B cell (primary cell): ENCODE measurements at regions of chr19 and their contacts with region 1.

Region 1: DNA sequence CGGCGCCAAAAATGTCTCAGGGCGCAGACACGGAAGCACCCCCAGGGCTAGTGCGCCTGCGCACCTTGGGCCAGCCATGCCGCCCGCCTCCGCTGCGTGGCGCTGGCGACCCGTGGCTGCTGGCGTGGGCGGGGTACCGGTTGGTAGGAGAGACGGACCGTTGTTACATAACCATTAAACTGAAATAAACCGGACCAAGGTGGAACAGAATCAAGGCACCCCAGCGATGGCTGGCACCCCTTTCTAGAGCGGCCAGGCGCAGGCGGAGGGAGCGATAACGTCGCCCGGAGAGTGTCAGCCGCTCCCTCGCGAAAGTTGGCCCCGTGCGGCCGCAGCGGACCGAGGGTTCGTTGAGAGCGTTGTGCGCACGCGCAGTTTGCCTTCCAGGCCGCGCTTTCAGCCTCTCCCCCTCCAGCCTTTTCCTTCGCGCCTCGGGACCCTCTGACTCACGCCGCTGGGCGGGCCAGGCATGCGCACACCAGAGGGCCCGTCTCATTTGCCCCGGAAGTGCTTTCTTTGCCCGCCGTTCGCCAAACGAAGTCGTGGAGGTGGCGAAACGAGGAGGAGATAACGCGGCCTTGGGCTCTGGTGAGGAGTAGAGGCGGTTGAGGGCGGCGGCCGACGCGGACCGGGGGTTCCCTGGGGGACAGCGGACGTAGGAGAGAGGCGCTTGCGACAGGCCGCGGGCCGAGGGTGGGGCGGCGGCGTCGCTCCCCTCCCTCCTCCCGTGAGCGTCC is at the starts of genes PLEKHJ1 and SF3A2:
- DNase-seq: peak; percentile 99
- ATAC-seq: peak; percentile 83
- H3K4me3 ChIP-seq: peak within 1 kb of the TSS; percentile 19 to 94 (median 70)
- H3K4me3 Mint-ChIP-seq: peak within 1 kb of the TSS; percentile 93
- H3K27ac ChIP-seq: peak within 1 kb of the TSS; percentile 97 to 99
- H3K27ac Mint-ChIP-seq: peak within 1 kb of the TSS; percentile 98
- H3K4me1 ChIP-seq: peaks cover 46 to 66% of the 10 kb centered on the region in 2 donors
- H3K4me1 Mint-ChIP-seq: peaks cover 65% of the 10 kb centered on the region
- H3K27me3 ChIP-seq: no peaks in the 10 kb centered on the region
- H3K27me3 Mint-ChIP-seq: no peaks in the 10 kb centered on the region
- CTCF ChIP-seq: peak; percentile 98
- total RNA-seq, gene PLEKHJ1: 82.4 and 86.7 TPM in 2 replicates
- total RNA-seq, gene SF3A2: 129 and 140 TPM in 2 replicates

Region 2: GRCh38 chr19:2117215-2117960 is 119.1 kb before region 1 on chr19:
- CTCF ChIA-PET with region 1: no interaction called
- POLR2A ChIA-PET with region 1: no interaction called
- intact Hi-C with region 1: no loop called
- DNase-seq: no peak
- ATAC-seq: no peak
- H3K4me3 ChIP-seq: no peak overlapping the region
- H3K4me3 Mint-ChIP-seq: no peak overlapping the region
- H3K27ac ChIP-seq: no peak overlapping the region
- H3K27ac Mint-ChIP-seq: no peak overlapping the region
- H3K4me1 ChIP-seq: no peaks in the 10 kb centered on the region
- H3K4me1 Mint-ChIP-seq: peaks cover 2% of the 10 kb centered on the region
- H3K27me3 ChIP-seq: no peaks in the 10 kb centered on the region
- H3K27me3 Mint-ChIP-seq: no peaks in the 10 kb centered on the region
- CTCF ChIP-seq: no peak

Region 3: DNA sequence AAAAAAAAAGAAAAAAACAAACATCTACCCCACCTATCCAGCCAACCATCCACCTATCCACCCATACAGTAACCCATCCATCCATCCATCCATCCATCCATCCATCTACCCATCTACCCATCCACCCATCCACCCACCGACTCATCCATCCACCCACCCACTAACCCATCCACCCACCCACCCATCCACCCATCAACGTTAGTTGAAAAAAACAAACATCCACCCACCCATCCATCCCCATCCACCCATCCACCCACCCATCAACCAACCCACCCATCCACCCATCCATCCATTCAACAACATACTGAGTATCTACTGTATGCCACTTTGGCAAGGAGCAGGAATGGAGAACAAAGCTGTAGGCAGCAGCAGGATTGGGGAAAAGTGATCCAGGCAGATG is 79.0 kb before region 1 on chr19:
- CTCF ChIA-PET with region 1: interaction called, 10 read pairs
- POLR2A ChIA-PET with region 1: interaction called, 3 read pairs
- intact Hi-C with region 1: loop called (anchors 2 kb)
- DNase-seq: no peak
- ATAC-seq: no peak
- H3K4me3 ChIP-seq: no peak overlapping the region
- H3K4me3 Mint-ChIP-seq: no peak overlapping the region
- H3K27ac ChIP-seq: no peak overlapping the region
- H3K27ac Mint-ChIP-seq: no peak overlapping the region
- H3K4me1 ChIP-seq: peaks cover 0 to 9% of the 10 kb centered on the region in 2 donors
- H3K4me1 Mint-ChIP-seq: peaks cover 10% of the 10 kb centered on the region
- H3K27me3 ChIP-seq: no peaks in the 10 kb centered on the region
- H3K27me3 Mint-ChIP-seq: no peaks in the 10 kb centered on the region
- CTCF ChIP-seq: no peak

Region 4: DNA sequence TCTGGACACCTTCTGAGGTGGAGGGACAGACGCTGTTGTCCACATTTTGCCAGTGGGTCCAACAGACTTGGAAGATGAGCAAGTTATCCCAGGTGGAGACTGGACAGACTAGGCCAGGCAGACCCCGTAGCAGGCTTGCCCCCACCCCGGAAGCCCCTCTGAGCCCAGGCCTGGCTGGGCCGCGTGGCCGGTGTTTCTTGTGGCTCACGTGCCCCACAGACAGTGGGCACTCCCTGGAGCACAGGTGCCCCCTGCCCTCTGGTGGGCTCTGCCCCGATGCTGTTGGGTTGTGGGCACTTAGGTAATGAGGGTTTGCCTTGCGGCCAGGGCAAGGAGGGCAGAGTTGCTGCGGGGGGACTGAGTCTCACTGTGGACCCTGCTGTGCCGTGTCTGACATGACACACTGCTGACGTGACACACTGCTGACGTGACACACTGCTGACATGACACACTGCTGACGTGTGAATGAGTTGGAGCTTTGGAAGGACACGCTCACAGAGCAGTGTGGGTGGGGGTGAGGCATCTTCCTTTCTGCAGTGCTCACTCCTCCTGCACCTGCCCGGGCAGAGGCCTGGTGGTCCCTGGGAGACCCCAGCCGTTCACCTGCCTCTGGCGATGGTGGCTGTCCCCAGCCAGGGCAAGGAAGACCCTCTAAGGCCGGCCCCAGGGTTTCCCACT is 47.6 kb before region 1 on chr19:
- CTCF ChIA-PET with region 1: no interaction called
- POLR2A ChIA-PET with region 1: no interaction called
- intact Hi-C with region 1: no loop called
- DNase-seq: no peak
- ATAC-seq: no peak
- H3K4me3 ChIP-seq: no peak overlapping the region
- H3K4me3 Mint-ChIP-seq: peak overlapping the region; percentile 49
- H3K27ac ChIP-seq: no peak overlapping the region
- H3K27ac Mint-ChIP-seq: peak overlapping the region; percentile 65
- H3K4me1 ChIP-seq: peaks cover 17 to 26% of the 10 kb centered on the region in 2 donors
- H3K4me1 Mint-ChIP-seq: peaks cover 37% of the 10 kb centered on the region
- H3K27me3 ChIP-seq: no peaks in the 10 kb centered on the region
- H3K27me3 Mint-ChIP-seq: no peaks in the 10 kb centered on the region
- CTCF ChIP-seq: no peak

Region 5: GRCh38 chr19:2221918-2222317 is 14.6 kb before region 1 on chr19:
- CTCF ChIA-PET with region 1: interaction called, 7 read pairs
- POLR2A ChIA-PET with region 1: interaction called, 4 read pairs
- intact Hi-C with region 1: loop called (anchors 1 kb)
- DNase-seq: no peak
- ATAC-seq: no peak
- H3K4me3 ChIP-seq: no peak overlapping the region
- H3K4me3 Mint-ChIP-seq: no peak overlapping the region
- H3K27ac ChIP-seq: no peak overlapping the region
- H3K27ac Mint-ChIP-seq: no peak overlapping the region
- H3K4me1 ChIP-seq: peaks cover 16 to 25% of the 10 kb centered on the region in 2 donors
- H3K4me1 Mint-ChIP-seq: peaks cover 29% of the 10 kb centered on the region
- H3K27me3 ChIP-seq: no peaks in the 10 kb centered on the region
- H3K27me3 Mint-ChIP-seq: no peaks in the 10 kb centered on the region
- CTCF ChIP-seq: no peak

Region 6: DNA sequence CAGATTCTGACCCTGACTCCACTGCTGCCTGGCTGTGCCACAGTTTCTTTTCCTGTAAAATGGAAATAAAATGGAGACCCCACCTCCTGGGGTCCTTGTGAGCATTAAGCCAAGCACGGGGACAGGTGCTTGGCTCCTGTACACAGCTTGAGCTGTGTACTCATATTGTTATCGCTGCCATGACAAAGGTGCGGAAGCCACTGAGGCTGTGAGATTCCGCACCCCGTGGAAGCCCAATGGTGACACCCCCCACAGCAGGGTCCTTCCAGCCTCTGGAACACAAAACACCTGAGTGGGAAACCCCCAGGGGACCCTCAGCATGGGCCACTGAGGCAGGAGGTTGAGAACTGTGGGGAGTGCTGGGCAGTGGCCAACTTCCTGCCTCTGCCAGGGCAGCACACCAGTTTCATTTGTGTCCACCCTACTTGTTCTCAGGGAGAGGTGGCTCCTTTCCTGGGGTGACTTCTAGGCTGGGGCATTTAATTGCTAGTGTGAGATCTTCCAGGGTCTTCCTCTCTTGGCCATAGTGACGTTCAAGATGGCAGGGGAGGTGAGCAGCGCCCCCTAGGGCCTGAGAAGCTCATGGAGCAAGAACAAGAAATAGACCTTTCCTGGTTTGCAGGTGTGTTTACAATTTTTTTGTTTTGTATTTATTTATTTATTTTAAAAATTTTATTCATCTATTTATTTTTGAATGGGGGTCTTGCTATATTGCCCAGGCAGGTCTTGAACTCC is 25.1 kb after region 1 on chr19:
- CTCF ChIA-PET with region 1: interaction called, 6 read pairs
- POLR2A ChIA-PET with region 1: interaction called, 10 read pairs
- intact Hi-C with region 1: loop called (anchors 1 kb)
- DNase-seq: no peak
- ATAC-seq: no peak
- H3K4me3 ChIP-seq: no peak overlapping the region
- H3K4me3 Mint-ChIP-seq: peak overlapping the region; percentile 55
- H3K27ac ChIP-seq: no peak overlapping the region
- H3K27ac Mint-ChIP-seq: peak overlapping the region; percentile 85
- H3K4me1 ChIP-seq: peaks cover 54 to 88% of the 10 kb centered on the region in 2 donors
- H3K4me1 Mint-ChIP-seq: peaks cover 50% of the 10 kb centered on the region
- H3K27me3 ChIP-seq: no peaks in the 10 kb centered on the region
- H3K27me3 Mint-ChIP-seq: no peaks in the 10 kb centered on the region
- CTCF ChIP-seq: peak; percentile 54

Region 7: DNA sequence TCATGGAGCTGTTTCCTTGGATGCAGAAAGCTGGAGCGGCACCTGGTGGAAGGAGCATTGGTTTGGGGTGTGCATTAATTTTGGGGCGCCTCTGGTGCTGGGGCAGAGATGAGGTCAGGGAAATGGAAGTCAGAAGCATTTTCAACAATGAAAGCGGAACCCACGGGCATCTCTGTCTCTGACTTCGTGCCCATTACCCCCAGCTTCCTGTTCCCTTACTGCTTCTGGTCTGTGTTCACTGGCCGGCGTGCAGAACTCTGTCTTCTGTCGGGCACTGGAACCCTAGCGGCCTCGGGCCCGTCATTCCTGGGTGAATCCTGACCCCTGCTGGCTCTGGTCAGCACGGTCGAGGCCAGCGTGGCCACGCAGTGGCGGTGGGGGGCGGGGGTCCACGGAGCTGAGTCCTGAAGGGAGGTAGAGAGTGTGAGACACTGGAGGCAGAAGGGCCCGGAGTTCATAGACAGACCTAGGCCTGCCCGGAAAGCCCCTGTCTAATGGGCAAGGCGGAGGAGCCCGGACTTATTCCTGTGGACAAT is 79.4 kb after region 1 on chr19:
- CTCF ChIA-PET with region 1: interaction called, 17 read pairs
- POLR2A ChIA-PET with region 1: interaction called, 8 read pairs
- intact Hi-C with region 1: loop called (anchors 1 kb)
- DNase-seq: peak; percentile 74
- ATAC-seq: peak; percentile 75
- H3K4me3 ChIP-seq: peak overlapping the region in 1 of 5 experiments; percentile 19
- H3K4me3 Mint-ChIP-seq: peak overlapping the region; percentile 74
- H3K27ac ChIP-seq: peak overlapping the region; percentile 62 to 75
- H3K27ac Mint-ChIP-seq: peak overlapping the region; percentile 93
- H3K4me1 ChIP-seq: peaks cover 46 to 55% of the 10 kb centered on the region in 2 donors
- H3K4me1 Mint-ChIP-seq: peaks cover 51% of the 10 kb centered on the region
- H3K27me3 ChIP-seq: peaks cover 0 to 10% (median 3%) of the 10 kb centered on the region in 4 experiments
- H3K27me3 Mint-ChIP-seq: no peaks in the 10 kb centered on the region
- CTCF ChIP-seq: no peak

Region 8: GRCh38 chr19:2427429-2428320 is 191.2 kb after region 1 on chr19 and contains the start of gene TIMM13:
- CTCF ChIA-PET with region 1: no interaction called
- POLR2A ChIA-PET with region 1: no interaction called
- intact Hi-C with region 1: loop called (anchors 1 kb)
- DNase-seq: peak; percentile 99
- ATAC-seq: peak; percentile 93
- H3K4me3 ChIP-seq: peak within 1 kb of the TSS; percentile 57 to 90 (median 74)
- H3K4me3 Mint-ChIP-seq: peak within 1 kb of the TSS; percentile 96
- H3K27ac ChIP-seq: peak within 1 kb of the TSS; percentile 75 to 80
- H3K27ac Mint-ChIP-seq: peak within 1 kb of the TSS; percentile 98
- H3K4me1 ChIP-seq: peaks cover 15 to 21% of the 10 kb centered on the region in 2 donors
- H3K4me1 Mint-ChIP-seq: peaks cover 13% of the 10 kb centered on the region
- H3K27me3 ChIP-seq: no peaks in the 10 kb centered on the region
- H3K27me3 Mint-ChIP-seq: no peaks in the 10 kb centered on the region
- CTCF ChIP-seq: no peak
- total RNA-seq, gene TIMM13: 31.9 and 32.5 TPM in 2 replicates